Activated CD4-positive, alpha-beta T cell treated with anti-CD3 and anti-CD28 coated beads for 36 hours (primary cell): ENCODE measurements at regions of chr15 and their contacts with region 1.

Region 1: DNA sequence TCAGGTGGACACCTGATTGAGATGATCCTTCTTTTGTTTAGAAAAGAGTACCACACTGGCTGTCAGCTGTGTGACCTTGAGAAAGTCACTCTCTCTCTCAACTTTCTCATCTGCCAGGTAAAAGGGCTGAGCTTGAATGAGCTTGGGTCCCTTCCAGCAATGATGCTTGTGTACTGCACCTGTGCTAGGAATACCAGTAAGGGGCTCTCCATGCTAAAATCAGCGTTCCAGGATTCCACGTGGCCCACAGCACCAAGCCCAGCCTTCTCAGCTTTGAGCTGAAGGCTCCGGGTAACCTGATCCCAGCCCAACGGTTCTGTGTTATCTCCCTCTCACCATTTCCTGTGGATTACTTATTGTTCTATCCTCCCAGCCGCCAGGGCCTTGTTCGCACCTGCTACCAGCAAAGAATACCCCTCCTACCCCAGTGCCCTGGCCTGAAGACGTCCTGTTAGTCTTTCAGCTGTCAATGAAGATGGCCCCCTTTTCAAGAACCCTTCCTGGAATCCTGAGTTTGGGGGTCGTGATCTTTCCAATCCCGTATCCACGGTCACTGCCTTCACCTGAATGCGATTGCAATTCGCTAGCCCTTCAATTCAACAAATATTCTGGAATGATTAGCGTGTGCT is 54.2 kb upstream of the CGNL1 start:
- DNase-seq: no peak
- ATAC-seq: no peak
- H3K4me3 Mint-ChIP-seq: no peak overlapping the region
- H3K27ac Mint-ChIP-seq: no peak overlapping the region
- H3K4me1 Mint-ChIP-seq: peaks cover 5% of the 10 kb centered on the region
- H3K27me3 Mint-ChIP-seq: no peaks in the 10 kb centered on the region

Region 2: GRCh38 chr15:57282686-57283085 is 39.4 kb before region 1 on chr15:
- CTCF ChIA-PET with region 1: no interaction called
- POLR2A ChIA-PET with region 1: interaction called, 11 read pairs
- intact Hi-C with region 1: no loop called
- DNase-seq: no peak
- ATAC-seq: no peak
- H3K4me3 Mint-ChIP-seq: no peak overlapping the region
- H3K27ac Mint-ChIP-seq: no peak overlapping the region
- H3K4me1 Mint-ChIP-seq: peaks cover 3% of the 10 kb centered on the region
- H3K27me3 Mint-ChIP-seq: no peaks in the 10 kb centered on the region

Region 3: DNA sequence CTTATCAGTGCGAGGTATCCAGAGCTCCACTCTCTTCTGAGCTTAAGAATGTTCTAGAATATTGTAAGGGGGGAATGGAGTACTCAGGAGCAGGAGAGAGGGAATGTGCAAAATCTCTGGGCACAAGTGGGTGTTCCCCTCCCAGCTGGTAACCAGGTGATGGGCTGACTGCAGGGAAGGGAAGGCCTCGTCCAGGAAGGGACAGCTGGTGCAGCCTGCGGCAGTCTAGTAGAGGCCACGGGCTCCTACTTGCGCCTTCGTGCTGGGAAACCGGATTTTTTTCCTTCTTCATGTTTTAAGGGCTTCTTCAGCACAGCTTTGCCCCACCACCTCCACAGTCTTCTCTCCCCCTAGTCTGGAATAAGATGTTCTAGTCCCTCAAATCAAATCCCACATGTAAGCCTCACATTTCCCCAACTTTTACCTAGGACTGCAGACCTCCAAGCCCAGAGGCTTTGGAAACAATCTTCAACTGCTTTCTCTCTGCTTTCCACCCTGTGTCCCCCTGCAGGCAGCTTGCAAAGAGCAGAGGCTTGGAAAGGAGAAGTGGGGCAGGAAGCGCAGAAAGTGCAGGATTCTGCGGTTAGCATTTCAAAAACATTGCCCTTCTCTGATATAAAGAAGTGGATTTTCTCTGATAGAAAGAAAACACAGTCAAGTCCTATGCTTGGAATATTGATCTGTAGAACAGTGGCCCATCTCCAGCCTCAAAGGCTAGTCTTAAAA is 42.4 kb after region 1 on chr15:
- CTCF ChIA-PET with region 1: no interaction called
- POLR2A ChIA-PET with region 1: no interaction called
- intact Hi-C with region 1: no loop called
- DNase-seq: no peak
- ATAC-seq: no peak
- H3K4me3 Mint-ChIP-seq: no peak overlapping the region
- H3K27ac Mint-ChIP-seq: no peak overlapping the region
- H3K4me1 Mint-ChIP-seq: no peaks in the 10 kb centered on the region
- H3K27me3 Mint-ChIP-seq: no peaks in the 10 kb centered on the region